ENCODE measurements at regions of chr19 and their contacts with region 1.

Region 1: DNA sequence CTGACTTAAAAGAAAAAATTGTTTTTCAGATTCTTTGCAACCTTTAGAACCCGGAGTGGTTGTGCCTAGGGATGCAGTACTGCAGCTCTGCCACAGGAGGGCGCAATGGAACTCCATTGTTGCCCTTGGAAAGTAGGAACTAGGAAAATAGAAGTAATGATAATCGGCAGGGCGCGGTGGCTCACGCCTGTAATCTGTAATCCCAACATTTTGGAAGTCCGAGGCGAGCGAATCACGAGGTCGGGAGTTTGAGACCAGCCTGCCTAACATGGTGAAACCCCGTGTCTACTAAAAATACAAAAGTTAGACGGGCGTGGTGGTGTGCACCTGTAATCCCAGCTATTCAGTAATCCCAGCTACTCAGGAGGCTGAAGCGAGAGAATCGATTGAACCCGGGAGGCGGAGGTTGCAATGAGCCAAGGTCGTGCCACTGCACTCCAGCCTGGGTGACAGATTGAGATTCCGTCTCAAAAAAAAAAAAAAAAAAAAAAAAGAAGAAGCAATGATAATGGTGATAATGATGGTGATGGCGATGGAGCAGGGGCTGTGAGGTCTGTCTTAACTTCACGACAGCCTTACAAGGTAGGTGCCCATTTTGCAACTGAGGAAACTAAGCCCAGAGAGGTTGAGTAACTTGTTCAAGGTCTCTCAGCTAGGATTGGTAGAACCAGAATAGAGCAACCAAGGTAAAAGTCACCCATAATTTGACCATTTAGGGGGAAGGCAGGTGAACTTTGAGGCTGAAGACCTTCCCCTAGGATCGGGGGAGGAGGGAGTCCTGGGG is 5.5 kb upstream of the ADAMTS10 start:
- DNase-seq: peak; percentile 81 to 88
- ATAC-seq: peak; percentile 66
- H3K4me3 ChIP-seq: no peak overlapping the region
- H3K27ac ChIP-seq: no peak overlapping the region
- H3K4me1 ChIP-seq: no peaks in the 10 kb centered on the region
- H3K27me3 ChIP-seq: no peaks in the 10 kb centered on the region

Region 2: DNA sequence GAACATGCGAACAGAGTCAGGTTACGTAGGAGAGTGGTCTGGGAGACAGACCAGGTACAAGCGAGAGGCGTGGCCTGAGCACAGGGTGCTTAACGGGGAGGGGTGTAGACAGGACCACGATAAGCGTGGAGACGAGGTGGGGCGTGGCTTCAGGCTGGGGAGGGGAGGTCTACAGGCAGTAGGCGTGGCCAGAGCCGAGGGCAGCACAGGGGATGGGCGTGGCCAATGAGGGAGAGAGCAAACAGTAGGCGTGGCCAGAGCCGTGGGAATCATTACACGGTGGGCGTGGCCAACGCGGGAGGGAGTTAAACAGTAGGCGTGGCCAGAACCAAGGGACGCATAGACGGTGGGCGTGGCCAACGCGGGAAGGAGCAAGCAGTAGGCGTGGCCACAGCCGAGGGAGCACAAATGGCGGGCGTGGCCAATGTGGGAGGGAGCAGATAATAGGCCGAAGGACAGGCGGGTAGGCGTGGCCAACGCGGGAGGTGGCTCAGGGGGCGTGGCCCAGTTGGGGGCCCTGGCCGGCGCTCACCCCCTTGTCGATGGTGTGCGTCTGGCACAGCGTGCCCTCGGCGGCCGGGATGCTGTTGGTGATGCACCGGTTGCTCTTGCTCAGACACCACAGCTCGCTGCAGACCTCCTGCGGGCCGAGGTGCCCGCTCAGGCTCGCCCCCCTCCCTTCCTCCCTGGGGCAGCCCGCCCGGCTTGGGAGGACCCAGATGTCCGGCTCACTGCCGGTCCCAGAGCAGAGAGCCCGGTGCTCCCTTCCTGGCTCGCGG is 23.6 kb before region 1 on chr19:
- intact Hi-C with region 1: loop called in 1 of 2 experiments (anchors 2 kb)
- DNase-seq: peak; percentile 98 to 99
- ATAC-seq: peak; percentile 95
- H3K4me3 ChIP-seq: no peak overlapping the region
- H3K27ac ChIP-seq: no peak overlapping the region
- H3K4me1 ChIP-seq: no peaks in the 10 kb centered on the region
- H3K27me3 ChIP-seq: no peaks in the 10 kb centered on the region

Region 3: GRCh38 chr19:8641908-8642547 is 26.0 kb after region 1 on chr19:
- intact Hi-C with region 1: loop called in 1 of 2 experiments (anchors 1 kb)
- DNase-seq: no peak
- ATAC-seq: no peak
- H3K4me3 ChIP-seq: no peak overlapping the region
- H3K27ac ChIP-seq: no peak overlapping the region
- H3K4me1 ChIP-seq: no peaks in the 10 kb centered on the region
- H3K27me3 ChIP-seq: no peaks in the 10 kb centered on the region

Region 4: DNA sequence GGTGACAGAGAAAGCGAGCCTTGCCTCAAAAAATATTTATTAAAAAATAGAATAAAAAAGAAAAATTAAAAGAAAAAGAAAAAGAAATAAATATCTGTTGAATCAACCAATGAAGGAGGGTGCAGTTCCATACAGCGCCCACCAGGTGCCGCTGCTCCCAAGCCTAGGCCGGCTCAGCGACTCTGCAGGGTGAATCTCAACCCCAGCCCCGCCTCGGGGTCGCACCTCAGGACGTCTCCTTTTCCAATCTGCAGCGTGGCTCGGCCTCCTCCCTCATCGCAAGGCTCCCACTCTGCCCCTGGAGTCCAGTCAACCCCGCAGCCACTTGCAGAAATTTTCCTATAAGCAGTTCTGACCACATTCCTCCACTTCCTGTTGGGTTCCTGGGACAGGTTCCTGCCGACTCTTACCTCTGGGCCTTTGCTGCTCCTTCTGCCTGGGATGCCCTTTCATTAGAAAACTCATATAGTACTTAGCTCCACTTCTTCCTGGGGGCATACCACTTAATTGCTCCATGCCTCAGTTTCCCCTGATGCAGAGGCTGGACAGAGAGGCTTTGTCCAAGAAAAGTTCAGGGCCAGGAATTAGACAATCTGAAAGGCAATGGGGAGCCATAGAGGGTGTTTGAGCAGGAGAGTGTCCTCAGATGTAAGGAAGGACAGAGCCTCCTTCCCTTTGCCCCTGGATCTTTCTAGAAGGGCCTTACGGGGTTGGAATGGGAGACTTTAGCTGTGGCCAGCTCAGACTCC is 38.8 kb after region 1 on chr19:
- intact Hi-C with region 1: no loop called
- DNase-seq: peak; percentile 66 to 88
- ATAC-seq: peak; percentile 84
- H3K4me3 ChIP-seq: no peak overlapping the region
- H3K27ac ChIP-seq: no peak overlapping the region
- H3K4me1 ChIP-seq: no peaks in the 10 kb centered on the region
- H3K27me3 ChIP-seq: no peaks in the 10 kb centered on the region

Measured in aorta (tissue), 5 donors.